BJ (cell line): ENCODE measurements at regions of chr2 and their contacts with region 1.

Region 1: DNA sequence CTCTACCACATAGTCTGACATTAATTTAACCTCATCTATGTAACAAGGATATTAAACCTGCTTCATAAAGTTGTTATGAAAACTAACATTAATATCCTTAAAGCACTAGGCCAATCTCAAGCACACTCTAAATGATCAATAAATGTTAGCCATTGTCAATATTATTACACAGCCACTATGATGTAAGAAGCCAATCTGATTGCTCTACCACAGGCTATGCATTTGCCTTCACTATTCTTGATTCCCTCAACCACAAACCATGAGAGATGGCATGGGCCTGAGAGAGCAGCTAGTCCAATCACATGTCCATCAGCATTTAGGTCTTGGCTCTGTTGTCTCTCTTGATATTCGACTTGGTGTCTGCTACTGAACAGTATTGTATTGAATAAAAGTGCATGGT is 4.2 kb downstream of the SLC25A12 start:
- DNase-seq: no peak
- H3K4me3 ChIP-seq: no peak overlapping the region
- H3K27me3 ChIP-seq: no peaks in the 10 kb centered on the region
- CTCF ChIP-seq: no peak

Region 2: GRCh38 chr2:171347591-171348032 is 542.2 kb before region 1 on chr2:
- CTCF ChIA-PET with region 1: no interaction called
- POLR2A ChIA-PET with region 1: no interaction called
- DNase-seq: peak; percentile 95
- H3K4me3 ChIP-seq: no peak overlapping the region
- H3K27me3 ChIP-seq: no peaks in the 10 kb centered on the region
- CTCF ChIP-seq: no peak

Region 3: GRCh38 chr2:171919453-171919852 is 29.6 kb after region 1 on chr2:
- CTCF ChIA-PET with region 1: no interaction called
- POLR2A ChIA-PET with region 1: interaction called, 19 read pairs
- DNase-seq: no peak
- H3K4me3 ChIP-seq: no peak overlapping the region
- H3K27me3 ChIP-seq: no peaks in the 10 kb centered on the region
- CTCF ChIP-seq: no peak